K562 (cell line): ENCODE measurements at regions of chr20 and their contacts with region 1.

Region 1: GRCh38 chr20:33653218-33653899 is 8.8 kb upstream of the C20orf144 start:
- DNase-seq: peak; percentile 72 to 79 (median 76)
- ATAC-seq: peak; percentile 87
- H3K4me3 ChIP-seq: no peak overlapping the region
- H3K27ac ChIP-seq: no peak overlapping the region
- H3K4me1 ChIP-seq: peaks cover 6 to 37% of the 10 kb centered on the region in 2 experiments; a peak in 3 of 5 replicates
- H3K27me3 ChIP-seq: no peaks in the 10 kb centered on the region
- CTCF ChIP-seq: peak; percentile 83 to 91 (median 86)
- EP300 ChIP-seq: no peak
- POLR2A ChIP-seq: peak; percentile 53
- RAD21 ChIP-seq: peak; percentile 48 to 90; a peak in 3 of 4 replicates

Region 2: DNA sequence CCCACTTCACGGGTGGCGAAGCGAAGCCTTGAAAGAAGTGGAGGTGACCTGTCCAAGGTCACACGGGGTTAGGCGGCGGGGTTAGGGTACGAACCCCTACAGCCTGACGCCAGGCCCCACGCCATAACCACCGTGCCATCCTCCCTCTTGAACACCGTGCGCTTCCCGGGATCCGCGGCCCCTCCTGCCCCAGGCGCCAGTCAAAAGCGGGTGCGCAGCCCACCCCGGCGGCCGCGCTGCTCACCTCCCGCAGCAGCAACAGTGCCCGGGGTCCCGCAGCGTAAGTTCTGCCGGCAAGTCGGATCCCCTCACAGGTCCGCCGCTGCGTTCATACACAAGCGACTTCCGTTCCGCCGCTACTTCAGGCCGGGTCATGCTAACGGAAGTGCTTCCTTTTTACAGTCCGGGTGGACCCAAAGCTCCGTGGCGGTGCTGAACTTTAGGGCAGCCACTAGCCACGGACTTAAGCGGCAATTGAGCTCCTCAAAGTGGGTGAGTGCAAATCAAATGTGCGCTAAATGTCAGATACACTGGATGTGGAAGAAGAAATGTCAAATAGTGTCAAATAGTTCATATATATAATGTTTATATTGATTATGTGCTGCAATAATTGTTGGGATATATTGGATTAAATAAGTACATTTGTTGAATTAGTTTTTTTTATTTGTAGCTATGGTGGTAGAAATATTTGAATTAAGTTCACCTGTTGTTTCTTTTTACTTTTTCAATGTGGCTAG is 252.0 kb before region 1 on chr20 and contains the start of gene CDK5RAP1:
- CTCF ChIA-PET with region 1: no interaction called
- POLR2A ChIA-PET with region 1: no interaction called
- in situ Hi-C with region 1: no loop called
- intact Hi-C with region 1: loop called (anchors 5 kb)
- DNase-seq: peak; percentile 84 to 96 (median 86)
- ATAC-seq: peak; percentile 95
- H3K4me3 ChIP-seq: peak within 1 kb of the TSS; percentile 88
- H3K27ac ChIP-seq: peak within 1 kb of the TSS; percentile 75
- H3K4me1 ChIP-seq: peaks cover 10 to 14% of the 10 kb centered on the region in 2 experiments
- H3K27me3 ChIP-seq: no peaks in the 10 kb centered on the region
- CTCF ChIP-seq: no peak
- EP300 ChIP-seq: peak; percentile 20; the same call in 1 of the 2 replicates
- POLR2A ChIP-seq: peak; percentile 90
- RAD21 ChIP-seq: peak in 1 of 2 experiments; percentile 4; a peak in 1 of 4 replicates
- polyA plus RNA-seq, gene CDK5RAP1: 116 to 127 TPM

Region 3: DNA sequence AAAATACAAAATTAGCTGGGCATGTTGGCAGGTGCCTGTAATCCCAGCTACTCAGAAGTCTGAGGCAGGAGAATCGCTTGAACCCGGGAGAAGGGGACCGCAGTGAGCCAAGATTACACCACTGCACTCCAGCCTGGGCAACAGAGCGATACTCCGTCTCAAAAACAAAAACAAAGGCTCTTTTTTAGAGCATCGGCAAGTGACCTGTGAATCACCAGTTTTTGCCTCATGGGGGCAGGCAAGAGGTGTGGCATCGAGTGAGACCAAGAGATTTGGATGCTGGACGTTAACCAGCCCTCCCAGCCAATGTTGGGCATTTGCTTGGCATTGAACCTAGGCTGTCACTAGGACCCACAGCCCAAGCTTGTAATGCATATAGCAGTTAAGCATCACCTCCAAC is 237.4 kb before region 1 on chr20:
- CTCF ChIA-PET with region 1: interaction called, 3 read pairs
- POLR2A ChIA-PET with region 1: interaction called, 4 read pairs
- in situ Hi-C with region 1: loop called (anchors 10 kb)
- intact Hi-C with region 1: no loop called
- DNase-seq: peak in 3 of 4 experiments; percentile 38 to 63 (median 47)
- ATAC-seq: peak; percentile 50
- H3K4me3 ChIP-seq: no peak overlapping the region
- H3K27ac ChIP-seq: no peak overlapping the region
- H3K4me1 ChIP-seq: peaks cover 25 to 26% of the 10 kb centered on the region in 2 experiments; a peak in 4 of 5 replicates
- H3K27me3 ChIP-seq: no peaks in the 10 kb centered on the region
- CTCF ChIP-seq: peak; percentile 66 to 70 (median 69)
- EP300 ChIP-seq: no peak
- POLR2A ChIP-seq: no peak
- RAD21 ChIP-seq: peak; percentile 45 to 76

Region 4: GRCh38 chr20:33450867-33451266 is 202.5 kb before region 1 on chr20:
- CTCF ChIA-PET with region 1: no interaction called
- POLR2A ChIA-PET with region 1: interaction called, 5 read pairs
- in situ Hi-C with region 1: loop called (anchors 5 kb)
- intact Hi-C with region 1: loop called (anchors 2 kb)
- DNase-seq: peak in 2 of 4 experiments; percentile 1 to 60
- ATAC-seq: peak; percentile 87
- H3K4me3 ChIP-seq: no peak overlapping the region
- H3K27ac ChIP-seq: no peak overlapping the region; the same call in 2 of the 3 replicates
- H3K4me1 ChIP-seq: peaks cover 2 to 10% of the 10 kb centered on the region in 2 experiments; a peak in 3 of 5 replicates
- H3K27me3 ChIP-seq: no peaks in the 10 kb centered on the region
- CTCF ChIP-seq: no peak
- EP300 ChIP-seq: no peak
- POLR2A ChIP-seq: no peak
- RAD21 ChIP-seq: no peak

Region 5: DNA sequence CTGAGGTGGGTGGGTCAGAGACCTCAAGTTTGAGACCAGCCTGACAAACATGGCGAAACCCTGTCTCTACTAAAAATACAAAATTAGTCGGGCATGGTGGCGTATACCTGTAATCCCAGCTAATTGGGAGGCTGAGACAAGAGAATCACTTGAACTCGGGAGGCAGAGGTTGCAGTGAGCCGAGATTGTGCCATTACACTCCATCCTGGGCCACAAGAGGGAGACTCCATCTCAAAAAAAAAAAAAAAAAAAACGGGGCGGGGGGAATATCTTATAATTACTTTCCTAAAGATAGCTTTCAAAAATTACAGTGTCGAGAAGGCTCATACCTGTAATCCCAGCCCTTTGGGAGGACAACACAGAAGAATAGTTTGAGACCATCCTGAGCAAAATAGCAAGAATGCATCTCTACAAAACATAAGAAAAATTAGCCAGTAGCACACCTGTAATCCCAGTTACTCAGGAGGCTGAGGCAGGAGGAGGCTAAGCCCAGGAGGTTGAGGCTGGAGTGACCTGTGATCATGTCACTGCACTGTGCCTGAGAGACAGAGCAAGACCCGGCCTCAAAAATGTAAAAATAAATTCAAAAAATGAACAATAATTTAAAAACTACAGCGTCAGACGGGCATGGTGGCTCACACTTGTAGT is 137.7 kb before region 1 on chr20:
- CTCF ChIA-PET with region 1: no interaction called
- POLR2A ChIA-PET with region 1: no interaction called
- in situ Hi-C with region 1: no loop called
- intact Hi-C with region 1: loop called (anchors 2 kb)
- DNase-seq: peak in 1 of 4 experiments; percentile 21
- ATAC-seq: peak; percentile 57; the same call in 2 of the 3 replicates
- H3K4me3 ChIP-seq: no peak overlapping the region
- H3K27ac ChIP-seq: no peak overlapping the region
- H3K4me1 ChIP-seq: peaks cover 4 to 5% of the 10 kb centered on the region in 2 experiments; a peak in 2 of 5 replicates
- H3K27me3 ChIP-seq: no peaks in the 10 kb centered on the region
- CTCF ChIP-seq: peak; percentile 31 to 39 (median 35); a peak in 4 of 6 replicates
- EP300 ChIP-seq: no peak
- POLR2A ChIP-seq: no peak
- RAD21 ChIP-seq: no peak

Region 6: DNA sequence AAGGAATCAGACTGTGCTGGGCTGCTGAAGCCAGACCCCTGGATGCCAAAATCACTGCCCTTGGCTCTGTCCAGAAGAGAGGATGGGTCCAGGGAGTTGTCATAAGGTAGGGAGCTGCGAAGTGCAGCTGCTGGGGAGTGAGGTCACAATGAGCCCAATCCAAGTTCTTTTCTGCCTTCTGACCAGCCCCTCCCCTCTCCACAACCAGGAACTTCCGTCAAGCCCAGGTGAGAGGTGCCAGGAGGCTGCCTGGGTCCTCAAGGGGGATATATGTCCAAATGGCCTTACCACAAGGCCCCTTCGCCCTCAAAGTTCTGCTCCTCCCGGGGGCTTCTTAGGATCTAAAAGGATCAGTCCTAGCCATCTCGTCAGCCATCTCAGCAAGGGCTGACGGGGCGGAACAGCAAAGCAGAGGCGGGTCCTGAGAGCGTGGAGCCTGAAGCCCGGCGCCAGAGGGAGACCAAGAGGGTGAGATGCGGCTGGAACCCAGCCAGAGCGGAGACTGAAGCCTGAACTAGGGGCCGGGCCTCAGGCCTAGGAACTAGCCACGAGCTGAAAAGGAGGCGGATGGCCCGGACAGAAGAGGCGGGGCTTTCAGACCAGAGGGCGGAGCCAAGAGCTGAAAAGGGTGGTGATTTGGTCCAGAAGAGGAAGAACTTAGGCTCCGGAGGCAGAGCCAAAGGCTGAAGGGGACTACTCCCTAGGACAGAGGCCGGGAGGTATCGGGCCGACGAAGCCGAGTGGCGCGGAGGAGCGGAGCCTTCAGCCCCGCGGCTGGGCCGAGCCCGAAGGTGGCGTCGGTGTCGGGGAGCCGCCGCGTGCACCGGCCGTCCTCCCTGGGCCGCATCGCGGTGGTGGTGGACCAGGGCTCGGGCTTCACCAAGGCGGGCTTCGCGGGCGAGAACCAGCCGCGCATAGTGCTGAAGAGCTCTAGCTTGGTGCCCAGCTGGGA is 13.2 kb after region 1 on chr20 and contains the start of gene ACTL10:
- CTCF ChIA-PET with region 1: no interaction called
- POLR2A ChIA-PET with region 1: interaction called, 51 read pairs
- in situ Hi-C with region 1: no loop called
- intact Hi-C with region 1: no loop called
- DNase-seq: peak; percentile 82 to 98 (median 88)
- ATAC-seq: peak; percentile 89
- H3K4me3 ChIP-seq: no peak within 1 kb of the TSS
- H3K27ac ChIP-seq: peak within 1 kb of the TSS; percentile 41; the same call in 2 of the 3 replicates
- H3K4me1 ChIP-seq: peaks cover 21 to 63% of the 10 kb centered on the region in 2 experiments; a peak in 4 of 5 replicates
- H3K27me3 ChIP-seq: no peaks in the 10 kb centered on the region
- CTCF ChIP-seq: peak; percentile 56 to 67 (median 61); a peak in 5 of 6 replicates
- EP300 ChIP-seq: peak; percentile 12; the same call in 1 of the 2 replicates
- POLR2A ChIP-seq: peak; percentile 47; the same call in 1 of the 2 replicates
- RAD21 ChIP-seq: peak; percentile 48 to 56
- polyA plus RNA-seq, gene ACTL10: not detected

Region 7: GRCh38 chr20:33697129-33697528 is 43.8 kb after region 1 on chr20:
- CTCF ChIA-PET with region 1: no interaction called
- POLR2A ChIA-PET with region 1: no interaction called
- in situ Hi-C with region 1: no loop called
- intact Hi-C with region 1: no loop called
- DNase-seq: no peak
- ATAC-seq: peak; percentile 27; the same call in 1 of the 3 replicates
- H3K4me3 ChIP-seq: no peak overlapping the region
- H3K27ac ChIP-seq: no peak overlapping the region
- H3K4me1 ChIP-seq: peaks cover 2 to 4% of the 10 kb centered on the region in 2 experiments; a peak in 3 of 5 replicates
- H3K27me3 ChIP-seq: no peaks in the 10 kb centered on the region
- CTCF ChIP-seq: no peak
- EP300 ChIP-seq: no peak
- POLR2A ChIP-seq: no peak
- RAD21 ChIP-seq: no peak

Region 8: DNA sequence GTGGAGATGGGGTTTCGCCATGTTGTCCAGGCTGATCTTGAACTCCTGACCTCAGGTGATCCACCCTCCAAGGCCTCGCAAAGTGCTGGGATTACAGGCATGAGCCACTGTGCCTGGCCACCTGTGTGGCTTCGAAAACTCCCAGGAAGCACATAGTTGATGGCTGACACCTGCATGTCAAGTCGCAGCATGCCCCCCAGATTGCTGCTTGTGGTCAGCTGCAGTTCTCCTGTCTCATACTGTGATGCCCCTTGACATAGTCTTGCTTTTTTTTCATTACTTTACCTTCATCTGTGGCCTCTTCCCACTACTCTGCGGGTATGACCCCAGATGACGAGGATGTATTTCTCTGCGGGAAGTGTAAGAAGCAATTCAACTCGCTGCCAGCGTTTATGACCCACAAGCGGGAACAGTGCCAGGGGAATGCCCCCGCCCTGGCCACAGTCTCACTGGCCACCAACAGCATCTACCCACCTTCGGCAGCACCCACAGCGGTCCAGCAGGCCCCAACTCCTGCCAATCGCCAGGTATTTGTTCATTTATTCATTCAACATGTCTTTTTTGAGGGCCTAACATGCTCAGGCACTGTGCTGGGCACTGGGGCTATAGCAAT is 91.5 kb after region 1 on chr20:
- CTCF ChIA-PET with region 1: no interaction called
- POLR2A ChIA-PET with region 1: no interaction called
- in situ Hi-C with region 1: no loop called
- intact Hi-C with region 1: no loop called
- DNase-seq: no peak
- ATAC-seq: no peak
- H3K4me3 ChIP-seq: no peak overlapping the region
- H3K27ac ChIP-seq: no peak overlapping the region
- H3K4me1 ChIP-seq: peaks cover 12 to 26% of the 10 kb centered on the region in 2 experiments; a peak in 4 of 5 replicates
- H3K27me3 ChIP-seq: no peaks in the 10 kb centered on the region
- CTCF ChIP-seq: no peak
- EP300 ChIP-seq: no peak
- POLR2A ChIP-seq: no peak
- RAD21 ChIP-seq: no peak

Region 9: DNA sequence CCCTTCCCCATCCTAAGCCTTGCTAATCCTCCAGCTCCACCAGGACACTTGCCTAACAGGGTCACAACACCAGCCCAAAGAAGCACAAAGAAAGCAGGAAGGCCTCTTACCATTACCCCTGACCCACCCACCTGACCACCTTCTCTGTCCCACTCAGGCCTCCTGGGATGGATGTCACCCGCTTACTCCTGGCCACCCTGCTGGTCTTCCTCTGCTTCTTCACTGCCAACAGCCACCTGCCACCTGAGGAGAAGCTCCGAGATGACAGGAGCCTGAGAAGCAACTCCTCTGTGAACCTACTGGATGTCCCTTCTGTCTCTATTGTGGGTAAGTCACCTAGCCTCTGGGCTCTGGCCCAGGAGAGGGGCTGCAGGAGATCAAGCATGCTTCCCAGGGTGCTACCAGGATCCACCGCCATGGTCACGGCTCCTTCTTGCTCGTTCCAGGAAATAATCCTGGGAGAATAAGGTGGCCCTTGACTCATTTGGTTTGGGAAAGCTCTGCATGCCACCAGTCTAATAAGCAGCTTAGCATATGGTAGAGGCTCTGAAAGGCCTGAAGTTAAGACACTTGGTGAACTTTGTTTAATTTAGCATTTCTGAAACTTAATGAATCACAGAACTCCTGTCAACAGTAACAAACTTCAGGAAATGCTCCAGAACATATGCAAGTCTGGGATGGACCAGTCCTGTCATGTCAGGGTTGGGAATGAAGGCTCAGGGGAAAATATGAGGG is 607.0 kb after region 1 on chr20:
- CTCF ChIA-PET with region 1: no interaction called
- POLR2A ChIA-PET with region 1: no interaction called
- in situ Hi-C with region 1: no loop called
- intact Hi-C with region 1: no loop called
- DNase-seq: no peak
- ATAC-seq: no peak
- H3K4me3 ChIP-seq: no peak overlapping the region
- H3K27ac ChIP-seq: no peak overlapping the region
- H3K4me1 ChIP-seq: peaks cover 0 to 12% of the 10 kb centered on the region in 2 experiments; a peak in 3 of 5 replicates
- H3K27me3 ChIP-seq: no peaks in the 10 kb centered on the region
- CTCF ChIP-seq: no peak
- EP300 ChIP-seq: no peak
- POLR2A ChIP-seq: no peak
- RAD21 ChIP-seq: no peak